Naive thymus-derived CD4-positive, alpha-beta T cell (primary cell): ENCODE measurements at regions of chr9 and their contacts with region 1.

Region 1: DNA sequence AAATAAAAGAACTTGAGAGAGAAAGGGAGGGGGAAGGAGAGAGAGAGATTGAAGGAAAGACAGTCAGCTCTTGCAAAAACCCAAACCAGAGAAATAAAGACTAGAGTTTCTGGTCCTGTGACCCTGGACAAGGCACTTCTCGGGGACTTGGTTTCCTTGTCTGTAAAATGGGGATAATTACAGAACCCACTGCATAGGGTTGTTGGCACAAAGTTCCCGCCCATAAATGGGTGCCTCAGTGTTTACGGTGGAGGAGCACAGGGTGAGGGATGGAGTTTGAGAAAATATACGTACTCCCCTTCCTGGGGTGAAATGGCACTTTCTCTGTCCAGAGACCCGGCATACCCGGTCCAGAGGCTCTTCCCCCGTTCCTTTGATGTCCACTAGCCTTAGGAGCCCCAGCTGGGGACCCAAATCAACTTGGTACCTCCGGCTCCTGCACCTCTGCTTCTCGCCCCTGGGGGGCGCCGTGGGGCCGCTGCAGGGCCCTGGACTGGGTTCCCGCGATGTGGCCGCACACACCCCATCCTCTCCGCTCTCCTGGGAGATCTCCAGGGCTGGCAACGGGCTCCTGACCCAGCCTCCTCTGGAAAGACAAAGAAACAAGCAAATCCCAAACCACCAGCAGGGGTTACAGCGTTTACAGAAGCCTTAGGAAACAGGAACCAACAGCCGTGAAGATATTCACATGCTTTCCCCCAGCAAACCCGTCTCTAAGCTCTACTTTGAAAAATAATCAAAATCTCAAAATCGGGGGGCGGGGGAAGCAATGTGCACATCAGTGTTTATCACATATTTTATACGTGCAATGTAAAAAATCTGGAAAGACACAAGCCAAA is 26.3 kb downstream of the PTGES start:
- DNase-seq: peak; percentile 30 to 73 (median 56)
- ATAC-seq: peak; percentile 95
- H3K4me3 ChIP-seq: no peak overlapping the region
- H3K4me3 Mint-ChIP-seq: peak overlapping the region in 9 of 10 donors; percentile 16 to 63 (median 55)
- H3K27ac ChIP-seq: no peak overlapping the region
- H3K27ac Mint-ChIP-seq: no peak overlapping the region
- H3K4me1 ChIP-seq: no peaks in the 10 kb centered on the region
- H3K4me1 Mint-ChIP-seq: peaks cover 0 to 4% (median 3%) of the 10 kb centered on the region in 7 donors
- H3K27me3 ChIP-seq: no peaks in the 10 kb centered on the region
- H3K27me3 Mint-ChIP-seq: peaks cover 0 to 23% (median 5%) of the 10 kb centered on the region in 5 donors

Region 2: GRCh38 chr9:129769669-129770068 is 43.1 kb after region 1 on chr9:
- CTCF ChIA-PET with region 1: no interaction called
- POLR2A ChIA-PET with region 1: no interaction called
- intact Hi-C with region 1: no loop called
- DNase-seq: no peak
- ATAC-seq: no peak
- H3K4me3 ChIP-seq: no peak overlapping the region
- H3K4me3 Mint-ChIP-seq: no peak overlapping the region
- H3K27ac ChIP-seq: no peak overlapping the region
- H3K27ac Mint-ChIP-seq: no peak overlapping the region
- H3K4me1 ChIP-seq: no peaks in the 10 kb centered on the region
- H3K4me1 Mint-ChIP-seq: peaks cover 0 to 6% (median 0%) of the 10 kb centered on the region in 7 donors
- H3K27me3 ChIP-seq: no peaks in the 10 kb centered on the region
- H3K27me3 Mint-ChIP-seq: peaks cover 0 to 6% (median 0%) of the 10 kb centered on the region in 5 donors

Region 3: DNA sequence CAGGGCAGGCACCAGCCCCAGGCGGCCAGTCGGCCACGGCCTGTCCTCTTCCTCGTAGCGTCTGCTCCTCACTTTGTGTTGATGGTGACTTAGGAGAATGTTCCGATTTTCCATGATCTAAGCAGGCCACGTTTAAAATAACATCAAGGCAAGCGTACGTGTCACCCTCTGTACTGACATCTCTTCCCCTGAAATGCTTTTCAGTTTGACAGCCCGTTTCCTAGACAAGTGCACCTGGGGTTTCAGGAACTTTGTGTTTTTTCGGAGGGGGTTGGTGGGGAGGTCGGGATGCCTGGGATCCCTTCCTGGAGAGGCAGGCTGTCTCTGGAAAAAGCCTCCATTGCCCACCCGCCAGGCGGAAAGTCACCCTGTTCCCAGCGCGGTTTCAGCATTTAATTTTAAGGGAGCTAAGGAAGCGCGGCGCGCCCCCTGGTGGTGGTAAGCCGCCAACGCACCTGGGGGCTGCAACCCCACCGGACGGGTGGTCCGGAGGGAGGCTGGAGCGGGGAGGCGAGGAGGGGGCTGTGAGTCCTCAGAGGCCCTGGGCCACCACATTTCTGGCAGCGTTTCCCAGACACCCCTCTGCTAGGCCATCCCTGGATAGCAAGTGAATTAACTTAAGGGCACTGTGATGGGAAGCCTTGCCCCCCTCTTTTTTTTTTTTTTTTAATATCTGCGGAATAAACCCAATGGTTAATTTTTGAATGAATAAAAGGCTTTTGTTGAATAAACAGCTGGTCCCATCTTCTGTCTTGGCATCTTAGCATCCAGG is 509.5 kb after region 1 on chr9:
- CTCF ChIA-PET with region 1: no interaction called
- POLR2A ChIA-PET with region 1: no interaction called
- intact Hi-C with region 1: loop called in 1 of 2 experiments (anchors 2 kb)
- DNase-seq: peak; percentile 41 to 79 (median 63)
- ATAC-seq: peak; percentile 79
- H3K4me3 ChIP-seq: no peak overlapping the region
- H3K4me3 Mint-ChIP-seq: peak overlapping the region in 7 of 10 donors; percentile 24 to 75 (median 54)
- H3K27ac ChIP-seq: no peak overlapping the region
- H3K27ac Mint-ChIP-seq: peak overlapping the region in 1 of 9 donors; percentile 43
- H3K4me1 ChIP-seq: peaks cover 7 to 11% of the 10 kb centered on the region in 2 donors
- H3K4me1 Mint-ChIP-seq: peaks cover 0 to 25% (median 15%) of the 10 kb centered on the region in 7 donors
- H3K27me3 ChIP-seq: no peaks in the 10 kb centered on the region
- H3K27me3 Mint-ChIP-seq: peaks cover 0 to 2% (median 0%) of the 10 kb centered on the region in 5 donors